IMR-90 (cell line): ENCODE measurements at regions of chr20 and their contacts with region 1.

Region 1: DNA sequence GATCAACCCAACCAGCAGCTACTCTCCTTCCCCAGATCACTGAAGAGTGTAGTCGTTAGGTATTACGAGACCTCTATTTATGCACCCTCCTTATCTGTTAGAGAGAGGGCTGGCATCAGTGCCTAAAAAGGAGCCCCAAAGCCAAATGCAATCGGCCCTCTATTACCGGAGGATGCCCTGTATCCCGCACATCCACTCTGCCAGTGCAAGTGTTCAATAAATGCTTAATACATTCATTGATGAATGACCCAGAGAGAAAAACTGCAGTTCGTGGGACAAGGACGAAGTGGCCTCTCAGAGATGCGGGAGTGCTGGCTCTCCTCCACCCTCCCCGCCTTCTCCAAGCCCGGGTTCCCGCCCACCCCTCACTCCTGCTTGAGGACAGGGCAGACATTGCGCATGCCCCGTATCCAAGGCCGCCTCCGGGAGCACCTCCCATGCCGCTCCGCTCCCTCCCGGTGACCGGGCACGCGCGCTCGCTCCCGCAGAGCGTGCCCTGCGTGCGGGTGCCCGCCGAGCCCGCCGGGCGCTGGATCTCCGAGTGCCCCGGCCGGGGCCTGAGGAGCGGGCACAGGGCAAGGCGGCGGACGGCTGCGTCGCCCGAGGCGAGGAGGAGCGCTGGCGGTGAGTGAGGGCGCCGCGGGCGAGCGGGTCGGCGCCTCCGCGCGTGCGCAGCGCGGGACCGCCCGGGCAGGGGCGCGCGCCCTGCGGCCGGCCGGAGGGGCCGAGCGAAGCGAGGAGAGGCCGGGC is 27.2 kb upstream of the BTBD3 start:
- DNase-seq: peak; percentile 91
- ATAC-seq: peak; percentile 91
- H3K4me3 ChIP-seq: peak overlapping the region; percentile 85
- H3K27ac ChIP-seq: peak overlapping the region; percentile 79
- H3K4me1 ChIP-seq: peaks cover 3% of the 10 kb centered on the region; the same call in 1 of the 2 replicates
- H3K27me3 ChIP-seq: no peaks in the 10 kb centered on the region
- CTCF ChIP-seq: no peak
- POLR2A ChIP-seq: 0 out of 2 replicates have a peak, but pooled peaks have one; percentile 21
- RAD21 ChIP-seq: no peak

Region 2: DNA sequence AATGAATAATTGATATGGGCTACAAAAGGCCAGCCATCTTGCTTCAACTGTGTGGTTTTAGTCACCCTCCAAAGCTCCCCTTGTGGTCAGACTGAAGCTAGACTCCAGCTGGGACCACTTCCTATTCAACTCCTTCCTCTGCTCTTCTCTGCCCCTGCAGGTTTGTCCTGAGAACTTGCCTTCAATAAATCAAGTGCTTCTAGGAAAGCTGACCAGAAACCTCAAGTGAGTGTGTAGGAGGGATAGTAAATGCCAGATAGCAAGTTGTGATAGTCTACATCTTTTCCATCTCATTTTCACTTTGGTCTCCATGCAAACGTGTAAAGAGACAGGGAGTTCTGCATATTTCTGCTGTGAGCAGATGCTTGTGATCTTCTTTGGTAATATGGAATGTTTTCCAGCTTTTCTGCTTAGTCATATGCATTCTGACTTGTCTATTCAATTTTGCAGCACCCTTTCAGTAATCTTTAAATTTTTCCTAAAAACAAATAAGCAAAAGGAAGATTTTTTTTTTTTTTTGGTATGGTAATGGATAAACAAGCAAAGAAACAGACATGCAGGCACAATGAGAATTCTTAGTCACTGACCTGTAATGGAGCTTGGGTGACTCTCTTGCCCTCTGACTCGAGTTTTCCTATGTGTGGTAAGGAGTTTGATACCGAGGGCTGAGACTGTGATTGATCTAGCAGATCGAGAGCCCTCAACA is 174.1 kb before region 1 on chr20:
- CTCF ChIA-PET with region 1: no interaction called
- POLR2A ChIA-PET with region 1: no interaction called
- dilution Hi-C with region 1: no loop called
- in situ Hi-C with region 1: no loop called
- intact Hi-C with region 1: loop called (anchors 1 kb)
- DNase-seq: peak; percentile 90
- ATAC-seq: peak; percentile 86
- H3K4me3 ChIP-seq: no peak overlapping the region
- H3K27ac ChIP-seq: peak overlapping the region; percentile 31; the same call in 1 of the 2 replicates
- H3K4me1 ChIP-seq: peaks cover 8% of the 10 kb centered on the region; the same call in 1 of the 2 replicates
- H3K27me3 ChIP-seq: peaks cover 5% of the 10 kb centered on the region; the same call in 1 of the 2 replicates
- CTCF ChIP-seq: peak; percentile 68
- POLR2A ChIP-seq: no peak
- RAD21 ChIP-seq: peak; percentile 36; the same call in 1 of the 2 replicates

Region 3: DNA sequence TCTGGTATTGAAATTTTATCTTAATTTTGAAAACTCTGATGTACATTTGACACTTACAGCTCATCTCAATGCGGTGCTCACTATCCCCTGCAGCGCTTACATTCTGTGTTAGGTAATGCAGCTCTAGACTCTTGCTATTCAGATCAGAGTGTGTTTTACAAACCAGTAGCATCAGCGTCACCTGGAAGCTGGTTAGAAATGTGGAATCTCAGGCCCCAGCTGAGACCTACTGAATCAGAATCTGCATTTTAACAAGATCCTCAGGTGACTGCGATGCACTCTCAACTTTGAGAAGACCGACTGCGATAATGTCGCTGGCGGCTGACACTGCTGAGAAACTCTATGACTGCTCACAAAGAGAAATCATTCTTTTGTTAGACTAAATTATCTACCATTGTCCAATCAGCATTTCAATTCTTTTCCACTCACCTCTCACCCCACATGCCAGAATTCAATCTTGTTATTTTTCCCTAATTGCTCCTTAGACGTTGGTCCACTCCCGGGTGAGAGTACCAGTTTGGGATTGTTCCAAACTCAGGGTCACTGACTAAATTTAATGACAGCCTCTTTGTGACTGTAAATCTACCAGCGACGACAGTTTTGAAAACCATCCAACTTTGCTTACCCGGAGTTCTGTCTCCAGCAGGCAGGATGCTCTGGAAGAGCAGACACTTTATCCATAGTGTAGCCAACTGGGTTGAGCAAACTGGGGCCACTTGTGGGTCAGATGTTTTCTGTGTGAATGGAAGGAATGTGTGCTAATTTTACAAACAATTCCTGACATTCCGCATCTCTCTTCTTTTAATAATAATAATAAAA is 112.9 kb before region 1 on chr20:
- CTCF ChIA-PET with region 1: no interaction called
- POLR2A ChIA-PET with region 1: no interaction called
- dilution Hi-C with region 1: no loop called
- in situ Hi-C with region 1: no loop called
- intact Hi-C with region 1: loop called (anchors 10 kb)
- DNase-seq: peak; percentile 40
- ATAC-seq: peak; percentile 94
- H3K4me3 ChIP-seq: no peak overlapping the region; the same call in 1 of the 2 replicates
- H3K27ac ChIP-seq: peak overlapping the region; percentile 19
- H3K4me1 ChIP-seq: peaks cover 5% of the 10 kb centered on the region
- H3K27me3 ChIP-seq: no peaks in the 10 kb centered on the region
- CTCF ChIP-seq: no peak
- POLR2A ChIP-seq: no peak
- RAD21 ChIP-seq: no peak

Region 4: GRCh38 chr20:11849976-11850670 is 40.4 kb before region 1 on chr20:
- CTCF ChIA-PET with region 1: no interaction called
- POLR2A ChIA-PET with region 1: no interaction called
- dilution Hi-C with region 1: no loop called
- in situ Hi-C with region 1: no loop called
- intact Hi-C with region 1: loop called (anchors 5 kb)
- DNase-seq: peak; percentile 45
- ATAC-seq: no peak
- H3K4me3 ChIP-seq: no peak overlapping the region
- H3K27ac ChIP-seq: no peak overlapping the region
- H3K4me1 ChIP-seq: peaks cover 22% of the 10 kb centered on the region
- H3K27me3 ChIP-seq: no peaks in the 10 kb centered on the region
- CTCF ChIP-seq: no peak
- POLR2A ChIP-seq: no peak
- RAD21 ChIP-seq: no peak

Region 5: DNA sequence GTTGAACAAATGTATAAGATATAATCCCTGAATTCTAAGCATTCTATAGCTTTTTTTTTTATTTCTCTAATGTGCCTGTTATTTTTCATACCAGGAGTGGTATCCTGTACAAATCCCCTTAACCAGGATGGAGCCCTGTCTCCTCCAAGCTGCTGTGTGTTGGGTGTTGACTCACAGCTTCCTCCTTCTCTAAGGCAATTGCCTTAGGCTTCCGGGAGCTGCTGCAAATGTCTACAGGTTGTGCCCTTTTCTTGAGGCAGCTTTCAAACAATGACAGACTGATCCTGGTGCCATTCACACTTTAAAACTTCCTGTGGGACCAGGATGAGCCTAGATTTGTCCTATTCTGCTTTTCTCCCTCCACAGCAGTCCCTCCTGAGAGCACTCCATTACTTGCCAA is 200.4 kb after region 1 on chr20:
- CTCF ChIA-PET with region 1: no interaction called
- POLR2A ChIA-PET with region 1: no interaction called
- dilution Hi-C with region 1: no loop called
- in situ Hi-C with region 1: no loop called
- intact Hi-C with region 1: no loop called
- DNase-seq: no peak
- ATAC-seq: no peak
- H3K4me3 ChIP-seq: no peak overlapping the region
- H3K27ac ChIP-seq: no peak overlapping the region
- H3K4me1 ChIP-seq: no peaks in the 10 kb centered on the region
- H3K27me3 ChIP-seq: no peaks in the 10 kb centered on the region
- CTCF ChIP-seq: no peak
- POLR2A ChIP-seq: no peak
- RAD21 ChIP-seq: no peak